ENCODE measurements at regions of chr17 and their contacts with region 1.

Region 1: DNA sequence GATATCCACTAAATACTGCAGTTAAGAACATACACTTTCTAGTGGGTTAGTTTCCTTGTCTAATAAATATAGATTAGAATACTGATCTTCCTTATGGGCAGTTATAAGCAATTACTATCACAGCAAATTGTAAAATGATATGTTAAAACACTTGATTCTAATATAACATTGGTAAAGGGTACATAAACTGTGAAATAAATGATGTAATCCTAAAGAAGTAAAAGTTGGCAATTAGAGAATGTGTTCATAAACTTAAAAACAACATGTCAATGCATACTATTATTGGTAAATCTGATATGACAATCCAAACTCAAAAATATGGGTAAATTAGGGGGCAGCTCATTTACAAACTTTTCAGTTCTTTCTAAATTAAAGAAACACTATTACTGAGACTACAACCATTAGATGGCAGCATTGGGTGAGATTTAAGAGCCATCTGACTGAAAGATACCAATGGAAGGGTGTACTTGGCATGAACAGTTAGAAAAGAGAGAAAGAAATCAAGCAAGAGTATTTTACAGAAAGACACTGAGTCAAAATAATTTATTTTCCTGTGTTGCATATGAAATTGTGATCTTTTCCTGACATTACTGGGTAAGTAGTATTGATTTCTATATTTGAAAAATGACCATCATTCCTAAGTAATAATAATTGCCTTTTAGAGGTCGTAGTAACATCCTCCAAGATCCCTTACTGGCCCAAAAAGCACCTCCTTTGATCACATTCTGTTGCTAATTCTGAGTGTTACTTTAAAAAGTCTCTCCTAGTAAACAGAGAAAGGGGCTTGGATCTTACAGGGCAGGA is 119.6 kb downstream of the SPAG9 start:
- DNase-seq: peak; percentile 5 to 62
- H3K4me3 ChIP-seq: no peak overlapping the region
- H3K27ac ChIP-seq: no peak overlapping the region
- H3K4me1 ChIP-seq: no peaks in the 10 kb centered on the region
- H3K27me3 ChIP-seq: no peaks in the 10 kb centered on the region
- CTCF ChIP-seq: peak; percentile 77

Region 2: DNA sequence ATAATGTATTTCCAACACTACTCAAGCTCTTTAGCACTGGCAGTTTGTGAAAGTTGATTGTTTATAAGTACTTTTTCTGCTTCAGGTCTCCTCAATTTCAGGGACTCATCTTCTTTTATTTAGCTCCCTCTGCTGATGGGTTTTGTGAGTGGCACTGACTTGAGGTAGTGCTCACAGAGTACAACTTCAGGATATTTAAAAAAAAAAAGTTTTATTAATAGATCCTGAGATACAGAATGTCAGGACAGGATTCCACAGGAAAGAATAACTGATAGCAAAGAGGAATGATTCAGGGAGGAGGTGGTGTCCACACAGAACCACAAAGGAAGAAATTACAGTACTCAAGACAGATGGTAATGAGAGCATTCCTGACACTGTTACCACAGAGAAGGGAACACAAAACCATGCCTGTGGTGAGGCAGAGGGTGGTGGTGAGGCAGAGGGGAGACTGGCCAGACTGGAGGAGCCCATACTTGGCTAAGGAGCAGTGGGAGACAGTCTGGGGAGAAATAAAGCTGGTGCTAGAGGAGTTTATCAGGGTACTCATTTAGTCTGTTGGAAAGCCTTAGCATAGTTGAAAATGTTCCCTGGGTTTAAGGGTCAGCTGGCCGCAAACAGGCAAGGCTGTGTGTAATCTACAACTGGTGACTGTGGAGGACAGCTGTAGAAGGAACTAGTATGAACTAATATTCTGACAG is 55.9 kb after region 1 on chr17:
- CTCF ChIA-PET with region 1: no interaction called
- POLR2A ChIA-PET with region 1: no interaction called
- intact Hi-C with region 1: loop called (anchors 1 kb)
- DNase-seq: peak; percentile 23 to 58
- H3K4me3 ChIP-seq: no peak overlapping the region
- H3K27ac ChIP-seq: peak overlapping the region; percentile 29; the same call in 1 of the 2 replicates
- H3K4me1 ChIP-seq: peaks cover 18% of the 10 kb centered on the region
- H3K27me3 ChIP-seq: no peaks in the 10 kb centered on the region
- CTCF ChIP-seq: peak; percentile 82

Region 3: DNA sequence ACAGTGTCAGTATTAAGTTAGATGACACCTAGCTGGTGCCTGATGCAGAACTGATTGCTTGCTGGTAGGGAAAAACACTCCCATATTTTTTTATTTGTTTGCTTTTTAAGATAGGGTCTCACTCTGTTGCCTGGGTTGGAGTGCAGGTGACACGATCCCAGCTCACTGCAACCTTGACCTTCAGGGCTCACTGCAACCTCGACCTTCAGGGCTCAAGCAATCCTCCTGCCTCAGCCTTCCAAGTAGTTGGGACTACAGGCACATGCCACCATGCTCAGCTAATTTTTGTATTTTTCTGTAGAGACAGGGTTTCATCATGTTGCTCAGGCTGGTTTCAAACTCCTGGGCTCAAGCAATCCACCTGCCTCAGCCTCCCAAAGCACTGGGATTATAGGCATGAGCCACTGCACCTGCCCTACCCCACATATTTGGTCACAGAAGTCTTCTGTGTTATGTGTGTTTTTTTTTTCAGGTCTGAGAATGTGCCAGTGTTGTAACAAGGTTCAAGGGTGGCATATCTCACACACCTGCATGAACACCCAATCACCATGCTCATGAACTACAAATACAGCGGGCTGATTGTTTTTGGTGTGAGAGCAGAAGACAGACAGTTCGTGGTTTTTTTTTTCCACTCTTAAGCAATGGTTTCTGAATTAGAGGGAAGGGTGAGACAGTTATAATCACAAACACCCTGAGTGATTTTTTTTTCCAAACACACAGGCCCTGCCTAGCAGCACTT is 96.8 kb after region 1 on chr17:
- CTCF ChIA-PET with region 1: interaction called, 10 read pairs
- POLR2A ChIA-PET with region 1: no interaction called
- intact Hi-C with region 1: no loop called
- DNase-seq: no peak
- H3K4me3 ChIP-seq: no peak overlapping the region
- H3K27ac ChIP-seq: no peak overlapping the region
- H3K4me1 ChIP-seq: no peaks in the 10 kb centered on the region
- H3K27me3 ChIP-seq: no peaks in the 10 kb centered on the region
- CTCF ChIP-seq: no peak

Region 4: DNA sequence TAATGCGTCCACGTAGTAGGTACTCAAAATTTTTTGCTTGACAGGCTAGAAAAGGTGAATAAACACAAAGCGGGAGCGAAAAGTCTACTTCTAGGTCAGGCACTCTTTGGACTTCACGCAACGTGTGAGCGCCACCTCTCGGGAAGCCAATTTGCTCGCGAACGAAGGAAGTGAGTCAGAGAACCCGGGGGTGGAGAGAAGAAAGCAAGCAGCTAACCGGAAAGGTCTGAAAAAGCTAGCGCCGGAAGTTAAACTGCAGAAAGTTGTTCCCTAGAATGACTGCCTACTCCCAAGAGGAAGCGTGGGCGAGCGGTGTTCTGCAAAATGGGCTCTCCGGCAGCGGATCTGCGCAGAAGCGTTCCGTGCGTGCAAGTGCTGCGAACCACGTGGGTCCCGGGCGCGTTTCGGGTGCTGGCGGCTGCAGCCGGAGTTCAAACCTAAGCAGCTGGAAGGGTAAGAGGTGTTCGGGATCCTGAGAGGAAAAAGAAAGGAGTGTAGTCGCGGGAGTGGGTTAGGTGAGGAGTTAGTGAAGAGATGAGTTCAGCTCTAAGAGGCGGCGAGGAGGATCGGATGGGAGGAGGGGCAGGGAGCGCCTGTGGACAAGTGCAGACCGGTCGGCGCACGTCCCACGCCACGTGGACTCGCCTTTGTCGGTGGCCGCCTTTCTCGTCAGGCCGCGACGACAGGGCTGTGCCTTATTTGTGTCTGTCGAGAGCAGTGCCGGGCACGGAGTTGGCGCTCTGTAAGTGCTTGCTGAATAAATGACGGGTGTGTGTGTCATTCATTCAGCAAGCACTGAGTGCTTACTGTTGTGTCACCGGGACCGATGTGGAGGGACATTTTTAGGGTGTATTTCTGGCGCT is 152.4 kb after region 1 on chr17 and contains the start of gene NME1:
- CTCF ChIA-PET with region 1: interaction called, 9 read pairs
- POLR2A ChIA-PET with region 1: no interaction called
- intact Hi-C with region 1: loop called (anchors 1 kb)
- DNase-seq: peak; percentile 96 to 99
- H3K4me3 ChIP-seq: peak within 1 kb of the TSS; percentile 72
- H3K27ac ChIP-seq: peak within 1 kb of the TSS; percentile 78
- H3K4me1 ChIP-seq: peaks cover 22% of the 10 kb centered on the region
- H3K27me3 ChIP-seq: no peaks in the 10 kb centered on the region
- CTCF ChIP-seq: peak; percentile 86
- total RNA-seq, gene NME1: 115 and 172 TPM in 2 replicates

Region 5: GRCh38 chr17:51166197-51166986 is 165.4 kb after region 1 on chr17 and contains the start of gene NME2:
- CTCF ChIA-PET with region 1: no interaction called
- POLR2A ChIA-PET with region 1: no interaction called
- intact Hi-C with region 1: loop called (anchors 5 kb)
- DNase-seq: peak; percentile 79 to 90
- H3K4me3 ChIP-seq: peak within 1 kb of the TSS; percentile 80
- H3K27ac ChIP-seq: peak within 1 kb of the TSS; percentile 78
- H3K4me1 ChIP-seq: peaks cover 18% of the 10 kb centered on the region; the same call in 1 of the 2 replicates
- H3K27me3 ChIP-seq: no peaks in the 10 kb centered on the region
- CTCF ChIP-seq: no peak
- total RNA-seq, gene NME2: 600 and 826 TPM in 2 replicates

Region 6: GRCh38 chr17:52084176-52084575 is 1083.1 kb after region 1 on chr17:
- CTCF ChIA-PET with region 1: no interaction called
- POLR2A ChIA-PET with region 1: no interaction called
- intact Hi-C with region 1: loop called (anchors 10 kb)
- DNase-seq: no peak
- H3K4me3 ChIP-seq: no peak overlapping the region
- H3K27ac ChIP-seq: no peak overlapping the region
- H3K4me1 ChIP-seq: no peaks in the 10 kb centered on the region
- H3K27me3 ChIP-seq: peaks cover 28% of the 10 kb centered on the region
- CTCF ChIP-seq: no peak